ENCODE measurements at regions of chr10 and their contacts with region 1.

Region 1: DNA sequence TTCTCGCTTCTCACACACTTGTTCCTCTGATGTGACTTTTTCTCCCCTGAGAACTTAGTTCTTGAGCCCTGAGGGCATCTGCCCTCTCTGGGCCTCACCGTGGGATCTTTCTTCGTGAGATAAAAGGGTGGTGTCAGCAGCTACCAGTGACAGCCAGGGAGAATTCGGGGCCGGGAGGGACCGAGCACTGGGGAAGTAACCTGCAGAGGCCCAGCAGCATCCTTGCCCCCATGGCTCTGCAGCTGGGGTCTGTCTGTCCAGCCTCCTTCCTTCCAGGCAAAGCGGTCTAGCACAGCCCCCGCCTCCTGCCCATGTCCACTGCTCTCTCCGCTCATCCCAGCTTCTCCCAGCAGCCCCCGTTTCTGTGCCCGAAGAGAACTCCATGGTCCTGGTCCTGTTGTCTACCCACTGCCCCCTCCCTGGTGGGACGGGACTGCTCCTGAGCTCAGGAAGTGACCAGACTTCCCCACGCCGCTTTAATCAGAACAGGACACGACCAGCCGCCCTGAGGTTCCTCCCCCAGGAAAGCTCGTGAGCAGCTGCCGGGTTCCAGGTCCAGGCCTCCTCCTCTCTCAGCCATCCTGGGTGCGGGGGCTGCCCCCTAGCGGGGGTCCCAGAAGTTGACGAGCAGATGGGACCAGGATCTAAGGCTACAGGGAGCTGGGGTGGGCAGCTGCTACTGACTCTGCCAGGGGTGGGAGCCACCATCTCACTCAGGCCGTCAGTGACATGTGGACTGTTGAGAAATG is 187.5 kb downstream of the WDR37 start:
- DNase-seq: peak; percentile 46
- ATAC-seq: peak; percentile 44
- H3K4me3 Mint-ChIP-seq: no peak overlapping the region
- H3K27ac Mint-ChIP-seq: no peak overlapping the region
- H3K4me1 Mint-ChIP-seq: peaks cover 31% of the 10 kb centered on the region
- H3K27me3 Mint-ChIP-seq: 0 out of 2 replicates have a peak, but pooled peaks cover 4% of the 10 kb centered on the region
- CTCF ChIP-seq: 0 out of 2 replicates have a peak, but pooled peaks have one; percentile 29

Region 2: GRCh38 chr10:1109795-1110673 is 133.6 kb before region 1 on chr10:
- CTCF ChIA-PET with region 1: interaction called, 32 read pairs
- POLR2A ChIA-PET with region 1: no interaction called
- DNase-seq: peak; percentile 83
- ATAC-seq: peak; percentile 92
- H3K4me3 Mint-ChIP-seq: no peak overlapping the region
- H3K27ac Mint-ChIP-seq: peak overlapping the region; percentile 4
- H3K4me1 Mint-ChIP-seq: peaks cover 31% of the 10 kb centered on the region
- H3K27me3 Mint-ChIP-seq: no peaks in the 10 kb centered on the region
- CTCF ChIP-seq: peak; percentile 51

Region 3: GRCh38 chr10:1180836-1181235 is 62.8 kb before region 1 on chr10:
- CTCF ChIA-PET with region 1: interaction called, 16 read pairs
- POLR2A ChIA-PET with region 1: no interaction called
- DNase-seq: no peak
- ATAC-seq: peak; percentile 46; the same call in 1 of the 2 replicates
- H3K4me3 Mint-ChIP-seq: no peak overlapping the region
- H3K27ac Mint-ChIP-seq: no peak overlapping the region
- H3K4me1 Mint-ChIP-seq: peaks cover 11% of the 10 kb centered on the region
- H3K27me3 Mint-ChIP-seq: no peaks in the 10 kb centered on the region; the same call in 1 of the 2 replicates
- CTCF ChIP-seq: no peak

Measured in WTC11 (cell line).